Kidney (tissue), 22 donors: ENCODE measurements at regions of chr6 and their contacts with region 1.

Region 1: GRCh38 chr6:90478789-90479602 is 107.9 kb downstream of the MAP3K7 start:
- DNase-seq: peak; percentile 89 to 94 (median 93)
- H3K4me3 ChIP-seq: no peak overlapping the region
- H3K27ac ChIP-seq: no peak overlapping the region
- H3K4me1 ChIP-seq: peaks cover 0 to 5% (median 0%) of the 10 kb centered on the region in 3 donors
- H3K27me3 ChIP-seq: no peaks in the 10 kb centered on the region
- CTCF ChIP-seq: peak; percentile 93

Region 2: DNA sequence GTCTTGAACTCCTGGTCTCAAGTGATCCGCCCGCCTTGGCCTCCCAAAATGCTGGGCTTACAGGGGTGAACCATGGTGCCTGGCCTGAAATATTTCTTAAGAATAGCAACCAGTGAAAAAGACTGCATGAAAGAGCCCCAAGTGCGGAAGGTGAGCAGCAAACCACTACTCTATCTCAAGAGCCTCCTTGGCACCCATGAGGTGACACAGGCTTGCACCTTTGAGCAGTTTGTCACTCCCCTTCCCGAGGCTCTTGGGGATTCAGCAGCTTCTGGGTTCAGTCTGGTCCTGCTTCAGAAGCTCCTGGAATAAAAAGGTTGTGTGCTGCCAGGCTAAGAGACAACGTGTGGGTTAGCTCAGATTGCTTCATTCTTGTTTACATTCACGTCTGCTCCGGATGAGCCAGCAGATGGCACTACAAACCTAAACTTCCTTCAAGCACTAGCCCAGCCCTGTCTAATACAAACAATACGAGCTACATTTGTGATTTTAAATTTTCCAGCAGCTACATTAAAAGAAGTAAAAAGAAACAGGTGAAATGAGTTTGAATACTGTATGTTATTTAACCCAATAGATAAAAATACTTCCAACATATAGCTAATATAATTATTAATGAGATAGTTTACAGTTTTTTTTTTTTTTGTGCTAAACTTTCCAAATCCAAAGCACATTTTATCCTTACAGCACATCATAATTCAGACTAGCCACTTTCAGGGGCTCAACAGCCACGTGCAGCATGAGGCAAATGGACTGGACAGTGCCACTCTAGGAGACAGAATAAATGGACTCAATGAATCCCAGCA is 538.6 kb before region 1 on chr6:
- intact Hi-C with region 1: loop called (anchors 10 kb)
- DNase-seq: peak in 4 of 5 donors; percentile 78 to 92 (median 85)
- H3K4me3 ChIP-seq: no peak overlapping the region
- H3K27ac ChIP-seq: no peak overlapping the region
- H3K4me1 ChIP-seq: no peaks in the 10 kb centered on the region
- H3K27me3 ChIP-seq: no peaks in the 10 kb centered on the region
- CTCF ChIP-seq: peak; percentile 75

Region 3: GRCh38 chr6:89970609-89971337 is 508.2 kb before region 1 on chr6:
- intact Hi-C with region 1: loop called (anchors 10 kb)
- DNase-seq: peak in 4 of 5 donors; percentile 57 to 88 (median 72)
- H3K4me3 ChIP-seq: no peak overlapping the region
- H3K27ac ChIP-seq: no peak overlapping the region
- H3K4me1 ChIP-seq: peaks cover 0 to 3% (median 0%) of the 10 kb centered on the region in 3 donors
- H3K27me3 ChIP-seq: no peaks in the 10 kb centered on the region
- CTCF ChIP-seq: peak; percentile 51